Naive thymus-derived CD8-positive, alpha-beta T cell (primary cell): ENCODE measurements at regions of chr11 and their contacts with region 1.

Region 1: DNA sequence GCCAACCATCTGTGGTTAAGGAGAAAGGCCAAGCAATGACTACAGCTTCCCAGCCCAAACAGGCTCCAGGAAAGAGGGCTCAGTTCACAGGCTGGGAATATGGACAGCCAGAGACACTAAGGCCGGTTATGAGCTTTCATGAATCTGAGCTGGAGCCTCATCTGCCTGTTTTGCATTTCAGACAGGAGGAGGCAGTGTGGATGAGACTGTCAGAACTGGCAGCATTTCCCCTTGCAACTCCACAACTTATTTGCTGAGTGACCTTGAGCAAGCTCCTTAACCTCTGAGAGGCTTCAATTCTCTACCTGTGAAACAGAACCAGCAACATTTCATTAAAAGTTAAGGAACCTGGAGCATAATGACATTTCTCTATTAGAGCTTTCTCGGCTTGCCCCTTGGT is 264.0 kb downstream of the ETS1 start:
- DNase-seq: peak in 6 of 10 donors; percentile 17 to 69 (median 52)
- ATAC-seq: no peak
- H3K4me3 Mint-ChIP-seq: peak overlapping the region; percentile 6 to 83 (median 76)
- H3K27ac Mint-ChIP-seq: peak overlapping the region; percentile 93 to 99 (median 98)
- H3K4me1 Mint-ChIP-seq: peaks cover 52 to 92% (median 86%) of the 10 kb centered on the region in 4 donors
- H3K27me3 Mint-ChIP-seq: no peaks in the 10 kb centered on the region

Region 2: GRCh38 chr11:128311742-128312719 is 11.3 kb before region 1 on chr11:
- POLR2A ChIA-PET with region 1: interaction called, 20 read pairs
- DNase-seq: peak in 2 of 10 donors; percentile 53 to 65
- ATAC-seq: peak; percentile 89 to 97
- H3K4me3 Mint-ChIP-seq: peak overlapping the region in 8 of 10 donors; percentile 1 to 73 (median 56)
- H3K27ac Mint-ChIP-seq: peak overlapping the region; percentile 90 to 99 (median 96)
- H3K4me1 Mint-ChIP-seq: peaks cover 32 to 84% (median 80%) of the 10 kb centered on the region in 4 donors
- H3K27me3 Mint-ChIP-seq: no peaks in the 10 kb centered on the region

Region 3: GRCh38 chr11:128342511-128343134 is 19.2 kb after region 1 on chr11:
- POLR2A ChIA-PET with region 1: interaction called, 13 read pairs
- DNase-seq: peak in 5 of 10 donors; percentile 12 to 64 (median 32)
- ATAC-seq: peak; percentile 17 to 32
- H3K4me3 Mint-ChIP-seq: peak overlapping the region in 8 of 10 donors; percentile 74 to 90 (median 84)
- H3K27ac Mint-ChIP-seq: peak overlapping the region; percentile 97 to 100 (median 98)
- H3K4me1 Mint-ChIP-seq: peaks cover 31 to 89% (median 75%) of the 10 kb centered on the region in 4 donors
- H3K27me3 Mint-ChIP-seq: no peaks in the 10 kb centered on the region

Region 4: DNA sequence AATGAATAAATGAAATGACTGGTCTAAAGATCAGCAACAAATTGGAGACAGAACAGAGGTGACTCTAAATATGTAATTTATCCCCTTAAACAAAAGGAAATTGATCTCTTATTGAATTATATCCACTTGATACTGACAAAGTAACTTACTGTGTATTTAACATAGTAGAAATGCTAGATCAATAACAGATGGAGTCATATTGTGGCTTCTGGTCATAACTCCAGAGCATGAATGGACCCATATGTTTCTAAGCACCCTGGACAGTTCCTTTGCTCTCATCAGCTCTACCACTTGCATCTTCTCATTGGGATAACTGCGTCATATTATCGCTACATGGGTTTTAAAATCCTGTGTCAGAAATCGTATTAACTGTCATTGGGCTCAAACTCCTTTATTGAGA is 41.7 kb after region 1 on chr11:
- POLR2A ChIA-PET with region 1: no interaction called
- DNase-seq: peak in 2 of 10 donors; percentile 32 to 45
- ATAC-seq: peak in 1 of 2 donors; percentile 50
- H3K4me3 Mint-ChIP-seq: no peak overlapping the region
- H3K27ac Mint-ChIP-seq: no peak overlapping the region
- H3K4me1 Mint-ChIP-seq: peaks cover 2 to 17% (median 14%) of the 10 kb centered on the region in 4 donors
- H3K27me3 Mint-ChIP-seq: no peaks in the 10 kb centered on the region

Region 5: GRCh38 chr11:128463371-128463829 is 140.0 kb after region 1 on chr11:
- POLR2A ChIA-PET with region 1: interaction called, 33 read pairs
- DNase-seq: no peak
- ATAC-seq: no peak
- H3K4me3 Mint-ChIP-seq: peak overlapping the region; percentile 56 to 89 (median 86)
- H3K27ac Mint-ChIP-seq: peak overlapping the region; percentile 93 to 99 (median 98)
- H3K4me1 Mint-ChIP-seq: peaks cover 66 to 96% (median 94%) of the 10 kb centered on the region in 4 donors
- H3K27me3 Mint-ChIP-seq: no peaks in the 10 kb centered on the region

Region 6: GRCh38 chr11:128472128-128473089 is 149.0 kb after region 1 on chr11:
- POLR2A ChIA-PET with region 1: interaction called, 61 read pairs
- DNase-seq: peak in 6 of 10 donors; percentile 26 to 56 (median 50)
- ATAC-seq: peak; percentile 2 to 33
- H3K4me3 Mint-ChIP-seq: peak overlapping the region; percentile 75 to 93 (median 88)
- H3K27ac Mint-ChIP-seq: peak overlapping the region; percentile 93 to 99 (median 98)
- H3K4me1 Mint-ChIP-seq: peaks cover 67 to 100% (median 96%) of the 10 kb centered on the region in 4 donors
- H3K27me3 Mint-ChIP-seq: no peaks in the 10 kb centered on the region

Region 7: DNA sequence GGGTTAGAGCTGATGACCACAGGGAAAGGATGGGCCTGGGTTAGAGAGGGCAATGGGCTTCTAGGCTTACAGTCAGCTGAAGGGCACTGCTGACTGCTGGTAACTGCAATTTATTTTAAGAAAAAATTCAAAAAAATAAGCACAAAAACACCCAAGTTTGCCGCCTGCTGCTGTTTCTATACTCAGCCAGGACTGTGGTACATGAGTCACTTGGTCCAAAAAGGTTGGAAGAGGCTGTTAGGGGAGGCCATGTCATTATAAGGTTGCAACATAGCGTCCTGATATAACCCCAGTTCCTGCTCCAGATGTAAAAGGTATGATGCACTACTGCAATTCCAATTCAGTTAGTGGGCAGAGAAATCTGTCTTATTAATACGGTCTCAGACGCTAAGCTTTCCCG is 165.1 kb after region 1 on chr11:
- POLR2A ChIA-PET with region 1: interaction called, 10 read pairs
- DNase-seq: no peak
- ATAC-seq: peak in 1 of 2 donors; percentile 33
- H3K4me3 Mint-ChIP-seq: peak overlapping the region; percentile 41 to 89 (median 70)
- H3K27ac Mint-ChIP-seq: peak overlapping the region; percentile 70 to 98 (median 95)
- H3K4me1 Mint-ChIP-seq: peaks cover 57 to 97% (median 96%) of the 10 kb centered on the region in 4 donors
- H3K27me3 Mint-ChIP-seq: no peaks in the 10 kb centered on the region